ENCODE measurements at regions of chr11 and their contacts with region 1.

Region 1: GRCh38 chr11:35919244-35919643 is 24.6 kb upstream of the LDLRAD3 start:
- DNase-seq: no peak
- H3K4me3 ChIP-seq: no peak overlapping the region
- H3K27ac ChIP-seq: no peak overlapping the region
- H3K4me1 ChIP-seq: no peaks in the 10 kb centered on the region
- H3K27me3 ChIP-seq: no peaks in the 10 kb centered on the region
- CTCF ChIP-seq: no peak

Region 2: DNA sequence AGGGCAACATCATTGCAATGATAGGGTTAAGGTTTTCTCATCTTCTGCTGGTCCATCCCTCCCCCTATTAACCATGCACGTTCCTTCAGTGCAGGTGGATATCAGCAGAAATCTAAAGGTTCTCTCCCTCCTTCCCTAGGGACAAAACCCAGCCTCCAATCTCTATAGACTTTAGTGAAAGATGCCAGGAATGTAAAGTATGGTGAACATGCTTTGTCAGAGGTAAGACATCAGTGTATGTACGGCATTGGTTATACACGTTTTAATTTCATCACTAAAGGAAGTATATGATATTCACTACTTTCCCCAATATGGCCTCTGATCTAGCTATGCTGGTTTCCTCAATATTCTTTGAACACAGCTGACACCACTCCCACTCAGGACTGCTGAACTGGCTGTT is 56.6 kb before region 1 on chr11:
- CTCF ChIA-PET with region 1: no interaction called
- POLR2A ChIA-PET with region 1: no interaction called
- intact Hi-C with region 1: loop called (anchors 5 kb)
- DNase-seq: no peak
- H3K4me3 ChIP-seq: no peak overlapping the region
- H3K27ac ChIP-seq: no peak overlapping the region
- H3K4me1 ChIP-seq: no peaks in the 10 kb centered on the region
- H3K27me3 ChIP-seq: no peaks in the 10 kb centered on the region
- CTCF ChIP-seq: no peak